CD4-positive, alpha-beta memory T cell (primary cell): ENCODE measurements at regions of chr9 and their contacts with region 1.

Region 1: GRCh38 chr9:97411789-97412625 is at the start of gene TDRD7:
- DNase-seq: peak; percentile 86 to 94 (median 90)
- H3K4me3 ChIP-seq: peak within 1 kb of the TSS; percentile 38 to 61
- H3K4me3 Mint-ChIP-seq: peak within 1 kb of the TSS; percentile 82 to 93 (median 90)
- H3K27ac ChIP-seq: peak within 1 kb of the TSS; percentile 84
- H3K27ac Mint-ChIP-seq: peak within 1 kb of the TSS; percentile 82 to 96 (median 93)
- H3K4me1 ChIP-seq: peaks cover 21% of the 10 kb centered on the region
- H3K4me1 Mint-ChIP-seq: peaks cover 23 to 37% (median 32%) of the 10 kb centered on the region in 4 donors
- H3K27me3 ChIP-seq: no peaks in the 10 kb centered on the region
- H3K27me3 Mint-ChIP-seq: peaks cover 5 to 16% of the 10 kb centered on the region in 2 donors
- total RNA-seq, gene TDRD7: 12.7 to 13.6 TPM

Region 2: GRCh38 chr9:96686548-96687335 is 725.3 kb before region 1 on chr9:
- CTCF ChIA-PET with region 1: no interaction called
- POLR2A ChIA-PET with region 1: no interaction called
- intact Hi-C with region 1: loop called (anchors 2 kb)
- DNase-seq: peak; percentile 61 to 89 (median 81)
- H3K4me3 ChIP-seq: peak overlapping the region in 1 of 2 donors; percentile 50
- H3K4me3 Mint-ChIP-seq: peak overlapping the region; percentile 72 to 91 (median 88)
- H3K27ac ChIP-seq: peak overlapping the region; percentile 36
- H3K27ac Mint-ChIP-seq: peak overlapping the region; percentile 54 to 88 (median 82)
- H3K4me1 ChIP-seq: no peaks in the 10 kb centered on the region
- H3K4me1 Mint-ChIP-seq: peaks cover 0 to 17% (median 10%) of the 10 kb centered on the region in 4 donors
- H3K27me3 ChIP-seq: no peaks in the 10 kb centered on the region
- H3K27me3 Mint-ChIP-seq: peaks cover 0 to 5% of the 10 kb centered on the region in 2 donors

Region 3: GRCh38 chr9:97502222-97502983 is 90.4 kb after region 1 on chr9:
- CTCF ChIA-PET with region 1: interaction called, 3 read pairs
- POLR2A ChIA-PET with region 1: interaction called, 3 read pairs
- intact Hi-C with region 1: loop called (anchors 1 kb)
- DNase-seq: peak in 2 of 5 donors; percentile 0 to 8
- H3K4me3 ChIP-seq: peak overlapping the region in 1 of 2 donors; percentile 14
- H3K4me3 Mint-ChIP-seq: peak overlapping the region; percentile 70 to 84 (median 78)
- H3K27ac ChIP-seq: no peak overlapping the region
- H3K27ac Mint-ChIP-seq: no peak overlapping the region
- H3K4me1 ChIP-seq: peaks cover 20% of the 10 kb centered on the region
- H3K4me1 Mint-ChIP-seq: peaks cover 11 to 26% (median 19%) of the 10 kb centered on the region in 4 donors
- H3K27me3 ChIP-seq: peaks cover 21% of the 10 kb centered on the region
- H3K27me3 Mint-ChIP-seq: peaks cover 34 to 35% of the 10 kb centered on the region in 2 donors

Region 4: GRCh38 chr9:97632985-97633858 is 221.2 kb after region 1 on chr9 and contains the starts of genes NCBP1 and TSTD2:
- CTCF ChIA-PET with region 1: interaction called, 3 read pairs
- POLR2A ChIA-PET with region 1: interaction called, 15 read pairs
- intact Hi-C with region 1: loop called (anchors 1 kb)
- DNase-seq: peak; percentile 96 to 97 (median 97)
- H3K4me3 ChIP-seq: peak within 1 kb of the TSS; percentile 80 to 87
- H3K4me3 Mint-ChIP-seq: peak within 1 kb of the TSS; percentile 96 to 100 (median 98)
- H3K27ac ChIP-seq: peak within 1 kb of the TSS; percentile 92
- H3K27ac Mint-ChIP-seq: peak within 1 kb of the TSS; percentile 96 to 100 (median 100)
- H3K4me1 ChIP-seq: peaks cover 52% of the 10 kb centered on the region
- H3K4me1 Mint-ChIP-seq: peaks cover 37 to 65% (median 51%) of the 10 kb centered on the region in 4 donors
- H3K27me3 ChIP-seq: no peaks in the 10 kb centered on the region
- H3K27me3 Mint-ChIP-seq: no peaks in the 10 kb centered on the region
- total RNA-seq, gene NCBP1: 40.7 to 50.8 TPM
- total RNA-seq, gene TSTD2: 17.8 to 18.4 TPM